Mammary epithelial cell (primary cell): ENCODE measurements at regions of chr2 and their contacts with region 1.

Region 1: DNA sequence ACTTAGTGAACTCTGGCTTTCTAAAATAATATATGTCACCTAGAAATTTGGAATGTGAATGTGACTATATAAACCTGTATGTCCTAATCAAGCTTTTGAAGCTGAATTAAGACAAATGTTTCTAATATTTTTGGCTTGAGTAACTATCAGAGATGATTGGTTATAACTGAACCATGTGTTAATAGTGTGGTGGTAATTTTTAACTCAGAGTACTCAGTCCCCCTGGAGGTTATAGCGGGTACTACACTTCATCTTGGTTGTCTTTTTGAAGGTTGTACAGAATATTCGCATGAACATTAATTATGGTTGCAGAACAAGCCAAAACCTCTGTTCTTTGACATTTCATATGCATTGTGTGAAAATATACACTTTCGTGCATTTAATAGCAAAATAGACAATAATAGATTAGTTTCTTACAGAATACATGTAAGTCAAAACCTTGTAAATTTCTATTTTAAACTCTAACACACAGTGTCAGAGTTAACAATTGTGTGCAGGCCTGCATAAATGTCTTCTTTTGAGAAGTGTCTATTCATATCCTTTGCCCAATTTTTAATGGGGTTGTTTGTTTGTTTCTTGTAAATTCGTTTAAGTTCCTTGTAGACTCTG is 86.0 kb downstream of the OSBPL6 start:
- DNase-seq: peak; percentile 41
- H3K4me3 ChIP-seq: no peak overlapping the region
- H3K27ac ChIP-seq: no peak overlapping the region
- H3K4me1 ChIP-seq: peaks cover 34% of the 10 kb centered on the region
- H3K27me3 ChIP-seq: no peaks in the 10 kb centered on the region
- CTCF ChIP-seq: peak; percentile 69 to 72

Region 2: GRCh38 chr2:178112202-178113152 is 167.9 kb before region 1 on chr2 and contains the start of gene RBM45:
- CTCF ChIA-PET with region 1: no interaction called
- dilution Hi-C with region 1: no loop called
- in situ Hi-C with region 1: no loop called
- intact Hi-C with region 1: loop called (anchors 1 kb)
- DNase-seq: peak; percentile 95
- H3K4me3 ChIP-seq: peak within 1 kb of the TSS; percentile 74 to 85 (median 75)
- H3K27ac ChIP-seq: peak within 1 kb of the TSS; percentile 22
- H3K4me1 ChIP-seq: peaks cover 17% of the 10 kb centered on the region
- H3K27me3 ChIP-seq: no peaks in the 10 kb centered on the region
- CTCF ChIP-seq: peak; percentile 94 to 100
- total RNA-seq, gene RBM45: 12.1 to 15.5 TPM

Region 3: GRCh38 chr2:178128836-178129630 is 151.3 kb before region 1 on chr2:
- CTCF ChIA-PET with region 1: interaction called, 5 read pairs
- dilution Hi-C with region 1: no loop called
- in situ Hi-C with region 1: loop called (anchors 10 kb)
- intact Hi-C with region 1: loop called (anchors 1 kb)
- DNase-seq: no peak
- H3K4me3 ChIP-seq: no peak overlapping the region
- H3K27ac ChIP-seq: no peak overlapping the region
- H3K4me1 ChIP-seq: no peaks in the 10 kb centered on the region
- H3K27me3 ChIP-seq: no peaks in the 10 kb centered on the region
- CTCF ChIP-seq: no peak

Region 4: DNA sequence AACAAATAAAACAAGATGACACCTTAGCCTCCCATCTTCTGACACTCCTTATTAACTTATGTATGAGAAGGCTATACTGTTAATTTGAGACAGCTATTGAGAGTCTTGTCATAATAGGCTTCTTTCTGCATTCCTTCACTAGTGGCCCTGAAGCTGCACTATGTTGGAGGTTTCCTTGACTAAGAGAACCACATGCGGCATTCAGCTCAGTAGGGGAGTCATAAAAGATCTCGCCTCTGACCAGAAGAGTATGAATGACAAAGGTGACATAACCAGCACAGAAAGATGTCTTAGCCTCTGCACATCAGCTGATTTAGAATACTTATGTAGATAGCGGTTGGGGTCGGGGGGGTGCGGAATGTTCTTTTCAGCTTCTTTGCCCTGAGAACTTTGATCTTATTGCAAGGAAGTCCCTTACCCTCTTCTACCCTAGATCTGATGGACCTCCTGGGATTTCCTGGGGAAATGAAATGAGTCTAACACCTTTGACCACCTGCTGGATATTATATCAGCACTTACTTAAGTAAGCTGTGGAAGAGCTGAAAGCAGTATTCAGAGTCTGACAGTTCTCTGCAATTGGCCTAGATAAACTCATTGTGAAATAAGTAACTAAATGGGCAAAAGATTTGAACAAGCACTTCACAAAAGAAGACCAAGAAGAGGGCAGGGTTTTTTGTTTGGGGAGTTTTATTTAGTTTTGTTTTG is 143.9 kb before region 1 on chr2:
- CTCF ChIA-PET with region 1: no interaction called
- dilution Hi-C with region 1: no loop called
- in situ Hi-C with region 1: loop called (anchors 10 kb)
- intact Hi-C with region 1: loop called (anchors 1 kb)
- DNase-seq: no peak
- H3K4me3 ChIP-seq: no peak overlapping the region
- H3K27ac ChIP-seq: no peak overlapping the region
- H3K4me1 ChIP-seq: no peaks in the 10 kb centered on the region
- H3K27me3 ChIP-seq: no peaks in the 10 kb centered on the region
- CTCF ChIP-seq: no peak

Region 5: GRCh38 chr2:178193823-178194599 is 86.3 kb before region 1 on chr2 and contains the start of gene OSBPL6:
- CTCF ChIA-PET with region 1: no interaction called
- dilution Hi-C with region 1: no loop called
- in situ Hi-C with region 1: no loop called
- intact Hi-C with region 1: loop called (anchors 1 kb)
- DNase-seq: peak; percentile 91
- H3K4me3 ChIP-seq: peak within 1 kb of the TSS; percentile 78 to 87 (median 79)
- H3K27ac ChIP-seq: peak within 1 kb of the TSS; percentile 68
- H3K4me1 ChIP-seq: peaks cover 26% of the 10 kb centered on the region
- H3K27me3 ChIP-seq: no peaks in the 10 kb centered on the region
- CTCF ChIP-seq: peak in 1 of 2 donors; percentile 11
- total RNA-seq, gene OSBPL6: 32.2 to 32.9 TPM

Region 6: DNA sequence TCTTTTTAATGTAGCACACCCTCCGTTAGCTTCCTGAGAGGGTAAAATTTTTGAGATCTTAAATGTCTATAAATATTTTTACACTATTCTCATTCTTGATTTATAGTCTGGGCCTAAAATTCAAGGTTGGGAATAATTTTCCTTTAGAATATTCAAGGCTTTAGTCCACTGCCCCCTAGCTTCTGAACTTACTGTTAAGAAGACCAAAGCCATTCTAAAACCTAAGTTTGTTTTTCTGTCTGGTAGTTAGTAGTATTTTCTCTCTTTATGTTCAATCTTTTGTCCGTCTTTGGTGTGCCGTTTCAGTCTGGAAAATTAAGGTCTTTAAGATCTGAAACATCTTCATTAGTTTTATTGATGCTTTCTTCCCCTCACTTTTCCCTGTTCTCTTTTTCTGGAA is 71.5 kb before region 1 on chr2:
- CTCF ChIA-PET with region 1: no interaction called
- dilution Hi-C with region 1: loop called (anchors 5 kb)
- in situ Hi-C with region 1: no loop called
- intact Hi-C with region 1: no loop called
- DNase-seq: no peak
- H3K4me3 ChIP-seq: no peak overlapping the region
- H3K27ac ChIP-seq: no peak overlapping the region
- H3K4me1 ChIP-seq: peaks cover 14% of the 10 kb centered on the region
- H3K27me3 ChIP-seq: no peaks in the 10 kb centered on the region
- CTCF ChIP-seq: peak; percentile 16 to 34

Region 7: DNA sequence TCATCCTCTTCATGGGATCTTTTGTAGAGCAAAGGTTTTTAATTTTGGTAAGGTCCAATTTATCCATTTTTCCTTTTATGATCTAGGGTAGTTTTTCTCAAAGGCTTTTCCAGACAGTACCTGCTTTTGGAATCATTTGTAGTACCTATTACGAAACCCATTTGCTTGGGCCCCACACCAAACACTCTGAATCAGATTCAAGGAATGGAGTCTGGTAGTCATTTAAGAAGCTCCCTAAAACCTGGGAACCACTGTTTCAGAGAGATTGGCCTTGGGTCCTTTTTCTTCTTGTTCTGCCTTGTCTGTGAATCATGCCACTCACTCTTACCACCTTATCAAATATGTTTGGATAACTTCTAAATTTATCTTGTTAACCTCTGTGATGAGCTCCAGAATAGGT is 45.7 kb before region 1 on chr2:
- CTCF ChIA-PET with region 1: no interaction called
- dilution Hi-C with region 1: no loop called
- in situ Hi-C with region 1: no loop called
- intact Hi-C with region 1: loop called (anchors 2 kb)
- DNase-seq: peak; percentile 83
- H3K4me3 ChIP-seq: no peak overlapping the region
- H3K27ac ChIP-seq: peak overlapping the region; percentile 30
- H3K4me1 ChIP-seq: peaks cover 52% of the 10 kb centered on the region
- H3K27me3 ChIP-seq: no peaks in the 10 kb centered on the region
- CTCF ChIP-seq: no peak

Region 8: DNA sequence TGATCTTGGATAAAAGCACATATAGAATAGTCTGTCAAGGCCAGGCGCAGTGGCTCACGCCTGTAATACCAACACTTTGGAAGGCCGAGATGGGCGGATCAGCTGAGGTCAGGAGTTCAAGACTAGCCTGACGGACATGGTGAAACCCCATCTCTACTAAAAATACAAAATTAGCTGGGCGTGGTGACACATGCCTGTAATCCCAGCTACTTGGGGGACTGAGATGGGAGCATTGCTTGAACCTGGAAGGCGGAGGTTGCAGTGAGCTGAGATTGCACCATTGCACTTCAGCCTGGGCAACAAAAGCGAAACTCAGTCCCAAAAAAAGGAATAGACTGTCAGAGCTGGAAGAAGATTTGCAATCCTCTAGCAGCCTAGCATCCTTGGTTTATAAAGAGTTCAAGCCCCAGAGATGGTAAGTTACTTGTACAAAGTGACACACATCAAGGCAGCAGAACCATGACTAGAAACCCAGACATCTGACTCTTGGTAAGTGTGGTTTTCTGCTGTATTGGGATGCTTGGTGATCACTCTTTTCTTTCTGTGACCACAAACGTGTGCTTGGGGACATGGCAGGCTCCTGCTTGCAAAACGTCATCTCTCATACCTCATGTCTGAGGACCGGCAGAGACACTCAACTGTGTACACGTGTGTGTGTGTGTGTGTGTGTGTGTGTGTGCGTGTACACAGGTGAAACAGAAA is 17.0 kb before region 1 on chr2:
- CTCF ChIA-PET with region 1: no interaction called
- dilution Hi-C with region 1: no loop called
- in situ Hi-C with region 1: no loop called
- intact Hi-C with region 1: no loop called
- DNase-seq: no peak
- H3K4me3 ChIP-seq: no peak overlapping the region
- H3K27ac ChIP-seq: no peak overlapping the region
- H3K4me1 ChIP-seq: peaks cover 7% of the 10 kb centered on the region
- H3K27me3 ChIP-seq: no peaks in the 10 kb centered on the region
- CTCF ChIP-seq: no peak

Region 9: DNA sequence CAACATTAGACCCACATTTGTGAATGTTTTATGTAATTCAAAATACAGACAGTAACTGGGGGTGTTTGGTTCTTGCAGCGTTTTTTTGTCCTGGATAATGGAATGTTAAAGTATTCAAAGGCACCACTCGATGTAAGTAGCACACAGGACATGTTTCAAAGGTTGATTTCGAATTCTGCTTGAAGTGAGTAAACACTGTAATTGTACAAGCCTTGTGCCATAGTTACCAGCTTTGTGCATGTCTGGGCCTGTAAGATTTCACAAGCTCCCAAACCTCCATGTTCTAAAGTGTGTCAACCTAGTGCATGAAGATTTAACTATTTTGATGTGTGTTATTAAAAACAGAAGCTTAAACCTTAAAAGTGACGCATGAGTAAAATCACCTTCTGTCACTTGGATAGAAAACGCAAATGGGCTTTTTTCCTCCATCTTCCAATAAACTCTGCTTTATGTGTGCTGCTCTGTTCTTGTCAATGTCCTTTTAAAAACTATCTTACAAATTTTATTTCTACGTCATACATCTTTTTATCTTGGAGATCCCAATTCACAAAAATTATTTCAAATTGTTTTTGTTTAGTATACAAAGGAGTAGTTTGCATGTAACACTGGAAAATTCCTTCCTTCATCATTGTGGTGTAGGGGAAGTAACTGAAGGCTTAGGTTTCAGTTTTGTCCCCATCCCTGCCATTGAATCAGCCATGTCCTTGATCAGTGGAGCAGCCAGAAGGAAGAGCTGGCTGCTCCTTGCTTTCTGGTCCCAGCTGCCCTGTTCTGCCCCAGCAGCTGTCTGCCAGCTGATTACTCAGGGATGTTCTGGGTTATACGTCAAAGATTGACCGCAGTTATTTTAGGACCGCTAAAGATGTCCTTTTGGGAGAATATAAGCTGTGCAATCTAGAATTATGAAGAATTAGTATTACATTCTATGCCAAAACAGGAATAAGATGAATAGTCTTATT is 51.4 kb after region 1 on chr2:
- CTCF ChIA-PET with region 1: no interaction called
- dilution Hi-C with region 1: no loop called
- in situ Hi-C with region 1: no loop called
- intact Hi-C with region 1: no loop called
- DNase-seq: peak; percentile 85
- H3K4me3 ChIP-seq: peak overlapping the region in 1 of 3 experiments; percentile 28
- H3K27ac ChIP-seq: peak overlapping the region; percentile 83
- H3K4me1 ChIP-seq: peaks cover 13% of the 10 kb centered on the region
- H3K27me3 ChIP-seq: no peaks in the 10 kb centered on the region
- CTCF ChIP-seq: no peak

Region 10: GRCh38 chr2:178962805-178963433 is 682.6 kb after region 1 on chr2:
- CTCF ChIA-PET with region 1: no interaction called
- dilution Hi-C with region 1: no loop called
- in situ Hi-C with region 1: no loop called
- intact Hi-C with region 1: no loop called
- DNase-seq: no peak
- H3K4me3 ChIP-seq: no peak overlapping the region
- H3K27ac ChIP-seq: no peak overlapping the region
- H3K4me1 ChIP-seq: no peaks in the 10 kb centered on the region
- H3K27me3 ChIP-seq: peaks cover 2% of the 10 kb centered on the region
- CTCF ChIP-seq: no peak